PC-3 (cell line): ENCODE measurements at regions of chr10 and their contacts with region 1.

Region 1: GRCh38 chr10:28250782-28251181 is 52.1 kb downstream of the MPP7 start:
- DNase-seq: peak; percentile 61
- ATAC-seq: peak; percentile 30; the same call in 1 of the 2 replicates
- H3K4me3 ChIP-seq: no peak overlapping the region
- H3K27ac ChIP-seq: no peak overlapping the region
- H3K4me1 ChIP-seq: peaks cover 26% of the 10 kb centered on the region
- H3K27me3 ChIP-seq: no peaks in the 10 kb centered on the region
- CTCF ChIP-seq: peak; percentile 71

Region 2: DNA sequence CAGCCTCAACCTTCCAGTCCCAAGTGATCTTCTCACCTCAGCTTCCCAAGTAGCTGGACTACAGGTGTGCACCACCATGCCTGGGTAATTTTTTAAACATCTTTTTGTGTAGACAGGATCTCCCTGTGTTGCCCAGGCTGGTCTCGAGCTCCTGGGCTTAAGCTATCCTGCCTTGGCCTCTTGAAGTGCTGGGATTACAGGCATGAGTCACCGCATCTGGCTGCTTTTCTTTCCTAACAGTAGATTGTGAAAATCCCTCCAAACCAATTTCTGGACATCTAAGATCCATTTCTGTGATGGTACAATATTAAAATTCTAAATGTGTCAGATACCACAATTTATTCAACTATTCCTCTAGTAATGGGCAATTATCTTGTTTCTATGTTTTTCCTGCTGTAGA is 708.0 kb before region 1 on chr10:
- CTCF ChIA-PET with region 1: no interaction called
- POLR2A ChIA-PET with region 1: interaction called, 12 read pairs
- intact Hi-C with region 1: no loop called
- DNase-seq: no peak
- ATAC-seq: no peak
- H3K4me3 ChIP-seq: no peak overlapping the region
- H3K27ac ChIP-seq: no peak overlapping the region
- H3K4me1 ChIP-seq: no peaks in the 10 kb centered on the region
- H3K27me3 ChIP-seq: no peaks in the 10 kb centered on the region
- CTCF ChIP-seq: no peak

Region 3: GRCh38 chr10:28169525-28169924 is 81.3 kb before region 1 on chr10:
- CTCF ChIA-PET with region 1: no interaction called
- POLR2A ChIA-PET with region 1: no interaction called
- intact Hi-C with region 1: no loop called
- DNase-seq: no peak
- ATAC-seq: no peak
- H3K4me3 ChIP-seq: no peak overlapping the region
- H3K27ac ChIP-seq: no peak overlapping the region
- H3K4me1 ChIP-seq: no peaks in the 10 kb centered on the region
- H3K27me3 ChIP-seq: no peaks in the 10 kb centered on the region
- CTCF ChIP-seq: no peak

Region 4: GRCh38 chr10:28302638-28303488 is 52.1 kb after region 1 on chr10 and contains the start of gene MPP7:
- CTCF ChIA-PET with region 1: interaction called, 15 read pairs
- POLR2A ChIA-PET with region 1: interaction called, 5 read pairs
- intact Hi-C with region 1: loop called (anchors 1 kb)
- DNase-seq: peak; percentile 96
- ATAC-seq: peak; percentile 98
- H3K4me3 ChIP-seq: peak within 1 kb of the TSS; percentile 79
- H3K27ac ChIP-seq: peak within 1 kb of the TSS; percentile 34; the same call in 1 of the 2 replicates
- H3K4me1 ChIP-seq: peaks cover 16% of the 10 kb centered on the region; the same call in 1 of the 2 replicates
- H3K27me3 ChIP-seq: no peaks in the 10 kb centered on the region
- CTCF ChIP-seq: no peak
- total RNA-seq, gene MPP7: 8.9 and 9.1 TPM in 2 replicates

Region 5: DNA sequence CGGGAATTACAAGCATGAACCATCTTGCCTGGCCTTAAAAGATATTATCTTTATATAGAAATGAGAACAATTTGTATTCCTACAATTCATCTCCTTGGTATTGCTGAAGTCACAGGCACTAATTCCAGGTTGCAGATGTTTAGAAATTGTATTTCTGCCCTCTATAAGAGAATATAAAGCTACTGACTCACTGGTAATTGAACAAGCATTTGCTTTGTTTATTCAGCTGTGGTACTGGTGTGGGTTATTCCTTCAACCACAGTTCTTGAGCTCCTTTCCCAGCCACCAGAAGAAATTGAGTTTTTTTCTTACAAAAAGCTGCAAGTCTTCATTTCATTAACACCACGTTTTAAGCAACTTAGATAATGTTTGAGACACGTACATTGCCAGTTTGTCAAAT is 81.1 kb after region 1 on chr10:
- CTCF ChIA-PET with region 1: no interaction called
- POLR2A ChIA-PET with region 1: interaction called, 20 read pairs
- intact Hi-C with region 1: no loop called
- DNase-seq: peak; percentile 55
- ATAC-seq: peak; percentile 64
- H3K4me3 ChIP-seq: no peak overlapping the region
- H3K27ac ChIP-seq: no peak overlapping the region
- H3K4me1 ChIP-seq: peaks cover 13% of the 10 kb centered on the region
- H3K27me3 ChIP-seq: no peaks in the 10 kb centered on the region
- CTCF ChIP-seq: no peak

Region 6: GRCh38 chr10:28381903-28382347 is 131.1 kb after region 1 on chr10:
- CTCF ChIA-PET with region 1: interaction called, 10 read pairs
- POLR2A ChIA-PET with region 1: interaction called, 3 read pairs
- intact Hi-C with region 1: loop called (anchors 1 kb)
- DNase-seq: peak; percentile 94
- ATAC-seq: peak; percentile 92
- H3K4me3 ChIP-seq: peak overlapping the region; percentile 67
- H3K27ac ChIP-seq: peak overlapping the region; percentile 76
- H3K4me1 ChIP-seq: peaks cover 3% of the 10 kb centered on the region; the same call in 1 of the 2 replicates
- H3K27me3 ChIP-seq: no peaks in the 10 kb centered on the region
- CTCF ChIP-seq: peak; percentile 92

Region 7: GRCh38 chr10:28393966-28394568 is 143.3 kb after region 1 on chr10:
- CTCF ChIA-PET with region 1: interaction called, 11 read pairs
- POLR2A ChIA-PET with region 1: no interaction called
- intact Hi-C with region 1: no loop called
- DNase-seq: peak; percentile 66
- ATAC-seq: peak; percentile 93
- H3K4me3 ChIP-seq: no peak overlapping the region
- H3K27ac ChIP-seq: no peak overlapping the region
- H3K4me1 ChIP-seq: no peaks in the 10 kb centered on the region
- H3K27me3 ChIP-seq: no peaks in the 10 kb centered on the region
- CTCF ChIP-seq: peak; percentile 86